ENCODE measurements at regions of chrX and their contacts with region 1.

Region 1: DNA sequence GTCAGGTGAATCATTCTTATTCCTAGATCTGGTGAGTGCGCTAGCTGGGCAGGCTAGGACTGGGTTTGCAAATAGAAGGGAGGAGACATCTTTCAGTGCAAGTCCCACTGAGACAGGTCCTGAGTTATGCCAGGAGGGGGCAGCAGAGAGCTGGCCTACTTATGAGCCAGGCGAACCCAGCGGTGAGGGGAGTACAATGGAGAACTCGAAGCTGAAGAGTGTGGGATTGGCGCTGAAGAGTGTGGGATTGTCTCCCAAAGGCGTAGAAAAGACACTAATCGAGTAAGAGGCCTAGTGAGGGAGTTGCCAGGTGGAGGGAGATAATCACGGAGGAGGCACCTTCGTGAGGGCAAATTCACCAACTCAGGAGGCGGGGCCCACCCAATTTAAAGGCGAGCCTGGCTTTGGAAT is 91.7 kb upstream of the CXorf66 start:
- DNase-seq: no peak

Region 2: DNA sequence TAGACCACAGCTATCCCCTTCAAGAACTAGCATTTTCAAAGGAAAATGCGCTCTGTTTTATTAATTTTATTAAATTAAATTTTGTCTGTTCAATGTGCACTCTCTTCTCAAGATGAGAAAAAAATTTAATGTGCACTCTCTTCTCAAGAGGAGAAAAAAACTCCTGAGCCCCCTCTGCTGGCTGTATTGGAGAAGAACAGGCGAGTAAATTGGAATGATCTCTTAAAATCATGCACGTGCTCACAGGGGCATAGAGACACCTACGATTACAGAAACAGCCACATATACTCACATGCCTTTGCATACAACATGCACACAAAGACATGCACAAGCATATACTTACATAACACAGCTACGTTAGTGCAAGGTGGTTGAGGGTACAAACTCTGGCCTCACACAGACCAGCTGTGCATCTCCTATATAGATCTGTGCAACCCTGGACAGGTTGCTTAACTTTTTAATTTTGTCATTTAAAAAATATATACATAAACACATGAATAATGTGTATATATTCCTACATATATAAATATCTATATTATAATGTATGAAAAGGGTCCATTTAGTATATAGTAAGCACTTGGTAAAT is 84.5 kb after region 1 on chrX:
- intact Hi-C with region 1: loop called (anchors 5 kb)
- DNase-seq: no peak

Region 3: DNA sequence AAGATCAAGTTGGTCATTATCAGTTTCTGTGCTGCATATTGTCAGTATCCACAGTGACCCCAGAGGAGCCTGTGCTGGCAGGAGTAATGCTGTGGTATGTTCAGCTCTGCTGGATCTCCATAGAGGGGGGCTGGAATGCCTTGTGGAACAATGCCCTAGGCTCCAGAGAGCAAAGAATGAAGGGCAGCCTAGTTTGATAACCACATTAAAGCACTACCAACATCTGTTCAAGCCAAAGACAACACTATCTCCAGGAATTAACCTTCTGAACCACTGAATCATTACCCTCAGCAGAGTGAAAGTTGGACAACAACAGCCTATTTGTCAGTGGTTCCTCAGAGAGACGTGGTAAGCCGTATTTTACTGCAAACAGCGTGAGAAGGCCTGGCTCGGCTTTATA is 100.6 kb after region 1 on chrX:
- intact Hi-C with region 1: no loop called
- DNase-seq: no peak

Region 4: DNA sequence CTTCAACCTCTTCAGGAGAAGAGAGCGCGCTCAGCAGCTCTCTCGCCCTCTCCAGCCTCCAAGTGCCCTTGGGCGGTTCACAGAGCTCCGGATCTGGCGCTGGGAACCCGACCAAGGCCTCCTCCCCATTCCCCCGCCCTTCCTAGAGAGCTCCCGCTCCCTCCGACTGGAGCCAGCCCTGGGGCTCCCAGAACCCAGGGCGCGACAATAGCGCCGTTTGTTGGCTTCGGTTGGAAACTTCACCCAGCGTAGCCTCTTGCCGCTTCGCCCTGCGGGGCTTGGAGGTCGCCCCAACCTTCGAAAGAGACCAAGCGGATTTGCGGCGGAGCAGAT is 451.0 kb after region 1 on chrX:
- intact Hi-C with region 1: loop called (anchors 5 kb)
- DNase-seq: no peak

Region 5: GRCh38 chrX:140664939-140665338 is 607.9 kb after region 1 on chrX:
- intact Hi-C with region 1: loop called (anchors 10 kb)
- DNase-seq: no peak